ENCODE measurements at regions of chr3 and their contacts with region 1.

Region 1: GRCh38 chr3:196192036-196192523 is 19.1 kb downstream of the ZDHHC19 start:
- DNase-seq: peak; percentile 49
- H3K4me3 Mint-ChIP-seq: peak overlapping the region; percentile 75
- H3K27ac Mint-ChIP-seq: peak overlapping the region; percentile 98
- H3K4me1 Mint-ChIP-seq: peaks cover 47% of the 10 kb centered on the region
- H3K27me3 Mint-ChIP-seq: no peaks in the 10 kb centered on the region

Region 2: DNA sequence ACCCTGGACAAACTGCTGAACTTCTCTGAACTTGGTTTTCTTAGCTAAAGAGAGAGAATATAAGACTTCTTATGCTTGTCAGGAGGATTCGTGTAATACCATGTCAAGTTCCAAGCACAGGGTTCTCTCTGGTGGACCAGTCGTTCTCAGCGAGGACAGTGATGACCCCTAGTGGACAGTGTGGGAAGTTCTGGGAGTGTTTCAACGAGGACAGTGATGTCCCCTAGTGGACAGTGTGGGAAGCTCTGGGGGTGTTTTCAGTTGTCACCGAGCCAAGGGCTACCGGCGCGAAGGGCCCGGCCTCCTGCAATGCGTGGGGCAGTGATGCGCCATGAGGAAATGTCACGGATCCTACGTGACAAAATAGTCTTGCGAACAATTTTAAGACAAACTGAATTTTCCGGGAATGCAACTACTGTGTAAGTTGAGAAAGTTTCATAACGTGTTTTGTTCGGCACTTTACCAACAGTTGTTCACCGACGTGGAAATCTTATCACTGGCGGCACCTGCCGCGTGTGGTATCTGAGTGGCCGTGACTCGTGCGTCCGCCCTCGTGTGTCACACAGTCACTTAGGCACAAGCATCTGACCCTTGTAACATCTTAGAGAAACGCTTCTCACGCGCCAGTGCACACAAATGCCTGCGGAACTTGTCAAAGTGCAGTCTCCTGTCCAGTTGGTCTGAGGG is 341.1 kb before region 1 on chr3:
- intact Hi-C with region 1: loop called (anchors 2 kb)
- DNase-seq: peak; percentile 83
- H3K4me3 Mint-ChIP-seq: no peak overlapping the region
- H3K27ac Mint-ChIP-seq: peak overlapping the region; percentile 41
- H3K4me1 Mint-ChIP-seq: no peaks in the 10 kb centered on the region
- H3K27me3 Mint-ChIP-seq: peaks cover 5% of the 10 kb centered on the region

Region 3: DNA sequence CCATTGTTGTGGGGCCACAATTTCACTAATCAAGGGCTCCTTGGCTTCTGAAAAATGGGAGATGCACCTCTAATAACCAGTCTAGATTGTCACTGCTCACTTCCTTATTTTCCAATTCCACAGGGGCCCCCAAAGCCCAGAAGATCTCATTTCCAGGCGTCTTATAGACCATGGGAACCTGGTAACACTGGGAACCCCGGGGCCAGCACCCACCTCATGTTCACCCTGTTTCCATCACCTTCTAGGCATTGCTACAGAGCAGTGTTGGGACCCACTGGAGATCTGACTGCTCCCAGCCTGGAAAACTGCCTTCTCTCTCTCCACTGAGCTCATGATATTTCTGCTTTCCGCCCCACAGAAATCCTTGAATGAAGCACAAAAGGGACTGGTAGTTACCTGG is 171.7 kb before region 1 on chr3:
- intact Hi-C with region 1: loop called (anchors 1 kb)
- DNase-seq: no peak
- H3K4me3 Mint-ChIP-seq: no peak overlapping the region
- H3K27ac Mint-ChIP-seq: no peak overlapping the region
- H3K4me1 Mint-ChIP-seq: no peaks in the 10 kb centered on the region
- H3K27me3 Mint-ChIP-seq: peaks cover 3% of the 10 kb centered on the region

Region 4: GRCh38 chr3:196073188-196073838 is 118.8 kb before region 1 on chr3:
- intact Hi-C with region 1: loop called (anchors 1 kb)
- DNase-seq: peak; percentile 60
- H3K4me3 Mint-ChIP-seq: peak overlapping the region; percentile 24
- H3K27ac Mint-ChIP-seq: peak overlapping the region; percentile 79
- H3K4me1 Mint-ChIP-seq: peaks cover 63% of the 10 kb centered on the region
- H3K27me3 Mint-ChIP-seq: no peaks in the 10 kb centered on the region

Region 5: GRCh38 chr3:196081791-196082618 is 110.1 kb before region 1 on chr3 and contains the start of gene TFRC:
- intact Hi-C with region 1: loop called (anchors 1 kb)
- DNase-seq: peak; percentile 95
- H3K4me3 Mint-ChIP-seq: peak within 1 kb of the TSS; percentile 100
- H3K27ac Mint-ChIP-seq: peak within 1 kb of the TSS; percentile 98
- H3K4me1 Mint-ChIP-seq: peaks cover 38% of the 10 kb centered on the region
- H3K27me3 Mint-ChIP-seq: no peaks in the 10 kb centered on the region
- total RNA-seq, gene TFRC: 791 TPM in 2 replicates

Region 6: GRCh38 chr3:196111939-196112386 is 80.1 kb before region 1 on chr3:
- intact Hi-C with region 1: loop called (anchors 1 kb)
- DNase-seq: peak; percentile 37
- H3K4me3 Mint-ChIP-seq: peak overlapping the region; percentile 47
- H3K27ac Mint-ChIP-seq: peak overlapping the region; percentile 96
- H3K4me1 Mint-ChIP-seq: peaks cover 27% of the 10 kb centered on the region
- H3K27me3 Mint-ChIP-seq: no peaks in the 10 kb centered on the region

Region 7: GRCh38 chr3:196263819-196264218 is 71.7 kb after region 1 on chr3:
- intact Hi-C with region 1: no loop called
- DNase-seq: no peak
- H3K4me3 Mint-ChIP-seq: no peak overlapping the region
- H3K27ac Mint-ChIP-seq: no peak overlapping the region
- H3K4me1 Mint-ChIP-seq: peaks cover 19% of the 10 kb centered on the region
- H3K27me3 Mint-ChIP-seq: no peaks in the 10 kb centered on the region

Region 8: GRCh38 chr3:196298521-196298920 is 106.4 kb after region 1 on chr3:
- intact Hi-C with region 1: no loop called
- DNase-seq: no peak
- H3K4me3 Mint-ChIP-seq: no peak overlapping the region
- H3K27ac Mint-ChIP-seq: no peak overlapping the region
- H3K4me1 Mint-ChIP-seq: peaks cover 6% of the 10 kb centered on the region
- H3K27me3 Mint-ChIP-seq: no peaks in the 10 kb centered on the region